ENCODE measurements at regions of chr7 and their contacts with region 1.

Region 1: DNA sequence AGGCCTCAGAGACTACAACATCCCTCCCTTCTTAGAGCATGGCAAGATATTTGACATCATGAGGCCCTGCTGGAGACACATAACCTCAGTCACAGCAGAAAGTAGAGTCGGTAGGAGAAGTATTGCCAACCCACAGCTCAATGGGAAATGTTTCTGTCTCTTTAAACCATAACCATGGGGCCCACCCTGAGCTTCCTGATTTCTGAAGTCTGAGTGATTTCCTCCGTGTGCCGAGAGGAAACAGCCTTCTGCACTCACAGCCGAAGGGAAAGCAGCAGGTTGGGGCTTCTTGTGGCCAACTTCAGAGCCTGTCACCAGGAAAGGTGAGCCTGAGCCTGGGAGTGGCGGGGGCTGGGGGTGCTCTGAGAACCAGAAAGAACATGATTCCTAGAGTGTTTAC is at the start of gene GIMAP1:
- DNase-seq: peak in 8 of 9 donors; percentile 14 to 85 (median 81)
- ATAC-seq: peak; percentile 90
- H3K4me3 ChIP-seq: peak within 1 kb of the TSS; percentile 88
- H3K4me3 Mint-ChIP-seq: peak within 1 kb of the TSS; percentile 89 to 100 (median 98)
- H3K27ac ChIP-seq: peak within 1 kb of the TSS; percentile 86
- H3K27ac Mint-ChIP-seq: peak within 1 kb of the TSS; percentile 76 to 98 (median 95)
- H3K4me1 ChIP-seq: peaks cover 39 to 46% of the 10 kb centered on the region in 2 donors
- H3K4me1 Mint-ChIP-seq: peaks cover 38 to 77% (median 61%) of the 10 kb centered on the region in 7 donors
- H3K27me3 ChIP-seq: no peaks in the 10 kb centered on the region
- H3K27me3 Mint-ChIP-seq: no peaks in the 10 kb centered on the region
- total RNA-seq, gene GIMAP1: 23.3 to 124 (median 32.6) TPM

Region 2: GRCh38 chr7:150481186-150481920 is 235.0 kb before region 1 on chr7:
- CTCF ChIA-PET with region 1: no interaction called
- POLR2A ChIA-PET with region 1: interaction called, 15 read pairs
- intact Hi-C with region 1: no loop called
- DNase-seq: peak in 8 of 9 donors; percentile 46 to 81 (median 71)
- ATAC-seq: peak; percentile 68
- H3K4me3 ChIP-seq: peak overlapping the region; percentile 12
- H3K4me3 Mint-ChIP-seq: peak overlapping the region; percentile 79 to 97 (median 90)
- H3K27ac ChIP-seq: peak overlapping the region; percentile 95
- H3K27ac Mint-ChIP-seq: peak overlapping the region; percentile 97 to 100 (median 100)
- H3K4me1 ChIP-seq: peaks cover 84 to 89% of the 10 kb centered on the region in 2 donors
- H3K4me1 Mint-ChIP-seq: peaks cover 58 to 99% (median 92%) of the 10 kb centered on the region in 7 donors
- H3K27me3 ChIP-seq: no peaks in the 10 kb centered on the region
- H3K27me3 Mint-ChIP-seq: no peaks in the 10 kb centered on the region

Region 3: GRCh38 chr7:150520145-150520544 is 196.2 kb before region 1 on chr7:
- CTCF ChIA-PET with region 1: interaction called, 4 read pairs
- POLR2A ChIA-PET with region 1: interaction called, 122 read pairs
- intact Hi-C with region 1: loop called (anchors 1 to 2 kb)
- DNase-seq: peak in 4 of 9 donors; percentile 17 to 51 (median 42)
- ATAC-seq: peak; percentile 29
- H3K4me3 ChIP-seq: peak overlapping the region; percentile 59
- H3K4me3 Mint-ChIP-seq: peak overlapping the region; percentile 93 to 100 (median 99)
- H3K27ac ChIP-seq: peak overlapping the region; percentile 84
- H3K27ac Mint-ChIP-seq: peak overlapping the region; percentile 80 to 98 (median 94)
- H3K4me1 ChIP-seq: peaks cover 8 to 9% of the 10 kb centered on the region in 2 donors
- H3K4me1 Mint-ChIP-seq: peaks cover 22 to 42% (median 36%) of the 10 kb centered on the region in 7 donors
- H3K27me3 ChIP-seq: no peaks in the 10 kb centered on the region
- H3K27me3 Mint-ChIP-seq: no peaks in the 10 kb centered on the region

Region 4: DNA sequence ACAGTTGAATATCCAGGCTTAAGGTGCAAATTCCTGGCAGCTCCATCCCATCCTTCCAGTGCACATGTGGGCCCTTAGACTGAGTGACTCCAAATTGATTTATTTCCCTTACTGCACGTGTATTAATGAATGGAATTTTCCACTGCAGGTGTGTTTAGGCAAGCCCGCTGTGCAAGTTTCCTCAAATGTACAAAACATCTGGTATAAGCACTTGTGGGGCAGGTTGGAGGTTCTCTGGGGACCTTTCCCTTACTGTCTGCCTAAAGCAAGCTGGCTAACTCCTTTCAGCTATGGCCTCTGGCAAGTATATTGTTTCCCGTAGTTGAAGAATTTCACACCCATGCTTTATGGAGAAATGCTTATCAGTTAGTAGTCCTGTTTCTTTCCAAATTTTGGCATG is 58.8 kb before region 1 on chr7:
- CTCF ChIA-PET with region 1: interaction called, 3 read pairs
- POLR2A ChIA-PET with region 1: interaction called, 12 read pairs
- intact Hi-C with region 1: no loop called
- DNase-seq: no peak
- ATAC-seq: no peak
- H3K4me3 ChIP-seq: no peak overlapping the region
- H3K4me3 Mint-ChIP-seq: no peak overlapping the region
- H3K27ac ChIP-seq: no peak overlapping the region
- H3K27ac Mint-ChIP-seq: peak overlapping the region in 3 of 9 donors; percentile 6 to 78 (median 20)
- H3K4me1 ChIP-seq: peaks cover 16 to 17% of the 10 kb centered on the region in 2 donors
- H3K4me1 Mint-ChIP-seq: peaks cover 22 to 57% (median 42%) of the 10 kb centered on the region in 7 donors
- H3K27me3 ChIP-seq: no peaks in the 10 kb centered on the region
- H3K27me3 Mint-ChIP-seq: no peaks in the 10 kb centered on the region

Region 5: GRCh38 chr7:150675714-150676113 is 40.7 kb before region 1 on chr7:
- CTCF ChIA-PET with region 1: interaction called, 5 read pairs
- POLR2A ChIA-PET with region 1: interaction called, 88 read pairs
- intact Hi-C with region 1: no loop called
- DNase-seq: no peak
- ATAC-seq: no peak
- H3K4me3 ChIP-seq: no peak overlapping the region
- H3K4me3 Mint-ChIP-seq: peak overlapping the region in 9 of 10 donors; percentile 34 to 93 (median 76)
- H3K27ac ChIP-seq: peak overlapping the region; percentile 71
- H3K27ac Mint-ChIP-seq: peak overlapping the region; percentile 82 to 98 (median 94)
- H3K4me1 ChIP-seq: peaks cover 38 to 52% of the 10 kb centered on the region in 2 donors
- H3K4me1 Mint-ChIP-seq: peaks cover 43 to 88% (median 78%) of the 10 kb centered on the region in 7 donors
- H3K27me3 ChIP-seq: no peaks in the 10 kb centered on the region
- H3K27me3 Mint-ChIP-seq: no peaks in the 10 kb centered on the region

Region 6: DNA sequence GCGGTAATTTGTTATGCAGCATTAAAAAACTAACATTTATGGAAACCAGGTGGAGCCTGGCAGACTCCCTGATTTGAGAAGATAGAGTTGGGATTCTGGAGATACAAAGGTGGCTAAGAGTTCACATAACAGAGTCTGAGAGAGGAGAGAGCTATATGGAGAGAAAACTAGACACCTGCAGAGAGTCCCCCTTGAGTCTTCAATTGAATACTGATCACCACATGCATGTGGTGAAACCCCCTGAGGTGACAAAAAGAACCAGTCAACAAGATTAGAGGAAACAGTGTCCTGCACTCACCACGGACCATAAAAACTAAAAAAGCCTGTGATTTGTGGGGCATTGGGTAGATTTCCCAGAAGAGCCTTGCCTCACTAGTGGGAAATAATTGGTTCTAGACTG is 20.7 kb before region 1 on chr7:
- CTCF ChIA-PET with region 1: no interaction called
- POLR2A ChIA-PET with region 1: interaction called, 188 read pairs
- intact Hi-C with region 1: no loop called
- DNase-seq: no peak
- ATAC-seq: no peak
- H3K4me3 ChIP-seq: no peak overlapping the region
- H3K4me3 Mint-ChIP-seq: no peak overlapping the region
- H3K27ac ChIP-seq: no peak overlapping the region
- H3K27ac Mint-ChIP-seq: peak overlapping the region in 1 of 9 donors; percentile 26
- H3K4me1 ChIP-seq: peaks cover 0 to 3% of the 10 kb centered on the region in 2 donors
- H3K4me1 Mint-ChIP-seq: peaks cover 0 to 25% (median 13%) of the 10 kb centered on the region in 7 donors
- H3K27me3 ChIP-seq: no peaks in the 10 kb centered on the region
- H3K27me3 Mint-ChIP-seq: no peaks in the 10 kb centered on the region

Measured in naive thymus-derived CD4-positive, alpha-beta T cell (primary cell).